HEK293T (cell line): ENCODE measurements at regions of chr7 and their contacts with region 1.

Region 1: GRCh38 chr7:138886501-138886917 is 88.5 kb upstream of the ATP6V0A4 start:
- DNase-seq: peak; percentile 65

Region 2: GRCh38 chr7:138975343-138976104 is 89.0 kb after region 1 on chr7:
- CTCF ChIA-PET with region 1: interaction called, 16 read pairs
- POLR2A ChIA-PET with region 1: interaction called, 3 read pairs
- DNase-seq: peak; percentile 32

Region 3: GRCh38 chr7:138981332-138982203 is 95.1 kb after region 1 on chr7 and contains the start of gene KIAA1549:
- CTCF ChIA-PET with region 1: interaction called, 16 read pairs
- POLR2A ChIA-PET with region 1: interaction called, 3 read pairs
- DNase-seq: peak; percentile 93

Region 4: GRCh38 chr7:139035586-139036353 is 149.3 kb after region 1 on chr7 and contains the start of gene ZC3HAV1L:
- CTCF ChIA-PET with region 1: no interaction called
- POLR2A ChIA-PET with region 1: no interaction called
- DNase-seq: peak; percentile 75

Region 5: DNA sequence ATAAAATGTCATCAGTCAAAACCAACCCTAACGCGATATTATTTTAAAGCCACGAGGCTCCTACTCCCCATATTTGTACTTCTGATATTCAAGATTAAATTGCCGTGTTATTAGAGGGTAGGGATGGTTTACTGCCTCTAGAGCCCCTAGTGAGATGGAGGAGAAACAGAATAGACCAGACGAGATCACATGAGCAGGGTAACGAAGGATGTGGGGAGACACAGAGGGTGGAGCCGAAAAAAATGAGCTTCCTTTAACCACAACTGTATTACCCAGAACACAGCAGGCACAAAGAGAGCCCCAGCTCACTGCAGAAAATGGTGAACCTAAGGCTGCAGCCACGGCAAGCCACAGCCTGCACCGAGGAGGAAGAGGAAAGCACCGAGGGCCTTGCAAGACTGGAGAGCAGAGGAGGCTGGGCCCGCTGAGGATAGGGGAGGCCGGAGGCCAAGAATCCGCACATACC is 208.7 kb after region 1 on chr7:
- CTCF ChIA-PET with region 1: no interaction called
- POLR2A ChIA-PET with region 1: no interaction called
- DNase-seq: no peak

Region 6: DNA sequence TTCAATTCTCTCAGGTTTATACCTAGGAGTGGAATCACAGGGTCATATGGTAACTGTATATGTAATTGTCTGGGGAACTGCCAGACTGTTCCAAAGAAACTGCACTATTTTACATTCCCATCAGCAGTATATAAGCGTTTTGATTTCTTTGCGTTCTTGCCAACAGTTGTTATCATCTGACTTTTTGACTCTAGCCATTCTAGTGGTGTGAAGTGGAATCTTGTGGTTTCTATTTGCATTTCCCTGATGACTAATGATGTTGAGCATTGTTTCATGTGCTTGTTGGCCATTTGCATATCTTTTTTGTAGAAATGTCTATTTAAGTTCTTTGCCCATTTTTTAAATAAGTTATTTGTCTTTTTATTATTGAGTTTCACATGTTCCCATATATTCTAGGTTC is 267.3 kb after region 1 on chr7:
- CTCF ChIA-PET with region 1: no interaction called
- POLR2A ChIA-PET with region 1: no interaction called
- DNase-seq: no peak